Activated CD8-positive, alpha-beta T cell treated with anti-CD3 and anti-CD28 coated beads, Interleukin-2, amount 10 ng/mL, durations not matched to agents 7 days and 5 days (primary cell): ENCODE measurements at regions of chr20 and their contacts with region 1.

Region 1: GRCh38 chr20:750801-751200 is 17.5 kb downstream of the SLC52A3 start:
- DNase-seq: no peak
- ATAC-seq: no peak
- H3K4me3 Mint-ChIP-seq: no peak overlapping the region
- H3K27ac Mint-ChIP-seq: no peak overlapping the region
- H3K4me1 Mint-ChIP-seq: peaks cover 4% of the 10 kb centered on the region
- H3K27me3 Mint-ChIP-seq: peaks cover 2% of the 10 kb centered on the region

Region 2: DNA sequence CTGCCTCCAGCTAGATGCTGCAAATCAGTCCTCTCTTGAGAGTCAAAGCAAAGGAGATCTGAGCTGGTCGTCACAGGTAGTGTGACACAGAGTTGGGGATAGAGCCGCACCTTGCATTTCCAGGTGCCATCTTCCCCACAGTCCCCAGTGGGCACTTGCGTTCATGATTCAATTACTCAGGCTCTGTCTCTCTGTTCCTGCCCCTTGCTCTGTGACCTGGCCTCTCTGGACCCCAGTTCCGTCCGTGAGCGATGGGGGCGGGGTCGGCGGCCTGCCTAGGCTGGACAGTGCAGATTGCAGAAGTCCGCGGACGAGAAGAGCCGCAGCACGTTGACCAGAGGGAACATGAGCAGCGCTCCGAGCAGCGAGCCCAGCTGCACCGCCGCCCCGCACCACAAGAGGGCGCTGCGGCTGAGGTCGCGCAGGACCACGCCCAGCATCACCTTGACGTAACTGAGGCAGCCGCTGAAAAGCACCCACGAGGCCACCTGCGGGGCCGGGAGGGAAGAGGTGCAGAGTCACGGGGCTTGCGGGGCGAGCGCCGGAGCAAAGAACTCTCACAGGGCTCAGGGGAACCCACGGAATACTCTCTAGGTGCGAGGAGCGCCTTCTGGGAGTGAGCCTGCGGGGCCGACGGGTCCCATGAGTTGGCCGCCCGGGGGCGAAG is 10.1 kb after region 1 on chr20:
- CTCF ChIA-PET with region 1: interaction called, 12 read pairs
- POLR2A ChIA-PET with region 1: interaction called, 3 read pairs
- DNase-seq: peak; percentile 39
- ATAC-seq: peak; percentile 65
- H3K4me3 Mint-ChIP-seq: no peak overlapping the region
- H3K27ac Mint-ChIP-seq: no peak overlapping the region
- H3K4me1 Mint-ChIP-seq: peaks cover 6% of the 10 kb centered on the region
- H3K27me3 Mint-ChIP-seq: peaks cover 6% of the 10 kb centered on the region

Region 3: GRCh38 chr20:944774-945410 is 194.1 kb after region 1 on chr20:
- CTCF ChIA-PET with region 1: no interaction called
- POLR2A ChIA-PET with region 1: no interaction called
- DNase-seq: no peak
- ATAC-seq: no peak
- H3K4me3 Mint-ChIP-seq: no peak overlapping the region
- H3K27ac Mint-ChIP-seq: no peak overlapping the region
- H3K4me1 Mint-ChIP-seq: no peaks in the 10 kb centered on the region
- H3K27me3 Mint-ChIP-seq: peaks cover 19% of the 10 kb centered on the region